ENCODE measurements at regions of chr12 and their contacts with region 1.

Region 1: DNA sequence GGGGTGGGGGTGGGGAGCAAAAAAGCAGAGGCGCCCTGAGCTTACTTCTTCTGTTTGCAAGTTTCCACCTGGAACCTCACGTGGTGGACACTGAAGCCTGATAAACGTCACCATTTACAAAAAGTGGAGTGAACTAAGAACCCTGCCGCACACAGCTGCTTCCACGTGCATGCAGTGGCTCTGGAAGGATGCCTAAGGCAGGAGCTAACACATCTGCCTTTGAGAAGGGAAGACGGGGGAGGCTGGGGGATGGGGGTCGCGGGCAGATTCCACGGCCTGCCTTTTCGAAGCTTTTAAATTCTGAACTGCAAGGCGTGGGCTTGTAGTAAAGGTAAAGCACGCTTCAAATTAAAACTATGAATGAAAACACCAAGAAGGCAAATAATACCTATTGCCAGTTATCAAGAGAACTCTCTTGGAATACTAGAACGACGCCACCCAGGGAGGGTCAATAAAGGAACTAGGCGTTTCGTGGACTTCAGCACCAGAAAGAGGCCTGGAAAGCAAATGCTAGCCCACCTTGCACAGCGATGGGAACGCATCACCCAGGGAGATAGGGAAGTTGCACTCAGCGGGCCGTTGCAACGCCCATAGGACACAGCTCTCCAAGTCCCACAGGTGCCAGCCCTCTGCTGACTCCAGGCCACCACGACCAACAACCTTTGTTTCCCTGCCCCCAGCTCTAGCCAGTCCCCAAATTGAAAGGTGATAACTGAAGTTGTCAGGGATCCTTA is 61.8 kb downstream of the TESC start:
- DNase-seq: no peak
- ATAC-seq: no peak
- H3K4me3 ChIP-seq: no peak overlapping the region
- H3K4me3 Mint-ChIP-seq: no peak overlapping the region
- H3K27ac ChIP-seq: no peak overlapping the region
- H3K27ac Mint-ChIP-seq: no peak overlapping the region
- H3K4me1 ChIP-seq: peaks cover 5% of the 10 kb centered on the region
- H3K4me1 Mint-ChIP-seq: no peaks in the 10 kb centered on the region
- H3K27me3 ChIP-seq: peaks cover 4% of the 10 kb centered on the region in 2 experiments
- H3K27me3 Mint-ChIP-seq: peaks cover 5% of the 10 kb centered on the region
- CTCF ChIP-seq: no peak

Region 2: DNA sequence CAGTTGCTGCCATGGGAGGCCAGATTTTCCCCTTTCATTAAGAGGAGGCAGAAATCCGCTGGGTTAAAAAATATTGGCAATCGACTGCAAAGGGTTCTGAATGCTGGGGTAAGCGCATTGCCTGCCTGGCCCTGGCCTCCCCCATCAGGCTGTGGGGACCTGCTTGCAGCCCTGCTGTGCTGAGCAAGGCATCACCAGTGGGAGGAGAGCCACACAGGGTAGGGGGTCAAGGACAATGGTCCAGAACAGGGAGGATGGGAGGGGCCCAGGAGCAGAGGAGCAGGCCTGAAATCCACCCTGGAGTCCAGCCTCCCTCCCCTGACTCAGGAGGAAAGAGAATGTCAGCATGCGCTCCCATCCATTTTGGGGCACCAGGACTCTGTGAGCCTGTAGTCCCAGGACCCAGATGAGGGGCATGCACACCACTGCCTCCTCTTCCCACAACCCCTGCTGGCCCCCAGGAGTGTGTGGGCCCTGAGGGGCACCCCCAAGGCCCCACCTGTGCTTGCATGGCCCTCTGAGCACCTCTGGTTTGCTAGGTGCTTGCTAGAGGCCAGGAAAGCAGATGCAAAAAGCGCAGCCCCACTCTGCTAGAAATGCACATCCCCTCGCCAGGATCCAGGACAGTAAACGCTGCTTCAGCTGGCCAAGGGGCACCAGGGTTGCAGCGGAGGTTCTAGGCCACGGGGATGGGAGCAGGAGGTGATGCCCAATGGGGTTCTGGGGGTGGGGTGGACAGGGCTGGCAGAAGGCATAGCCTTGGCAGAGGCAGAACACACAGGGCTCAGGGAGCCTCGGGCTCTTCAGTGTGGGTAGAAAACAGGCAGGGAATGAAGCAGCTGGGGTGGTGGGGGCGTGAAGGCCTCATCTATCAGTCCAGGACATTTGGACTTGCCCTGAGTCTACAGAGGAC is 47.2 kb after region 1 on chr12:
- CTCF ChIA-PET with region 1: interaction called, 4 read pairs
- POLR2A ChIA-PET with region 1: no interaction called
- intact Hi-C with region 1: loop called in 1 of 2 experiments (anchors 2 kb)
- DNase-seq: no peak
- ATAC-seq: no peak
- H3K4me3 ChIP-seq: no peak overlapping the region
- H3K4me3 Mint-ChIP-seq: no peak overlapping the region
- H3K27ac ChIP-seq: no peak overlapping the region
- H3K27ac Mint-ChIP-seq: no peak overlapping the region
- H3K4me1 ChIP-seq: no peaks in the 10 kb centered on the region
- H3K4me1 Mint-ChIP-seq: no peaks in the 10 kb centered on the region
- H3K27me3 ChIP-seq: no peaks in the 10 kb centered on the region
- H3K27me3 Mint-ChIP-seq: no peaks in the 10 kb centered on the region
- CTCF ChIP-seq: no peak